GM18951 (cell line): ENCODE measurements at regions of chr1 and their contacts with region 1.

Region 1: GRCh38 chr1:212477014-212477679 is 44.4 kb downstream of the NENF start:
- POLR2A ChIP-seq: no peak

Region 2: GRCh38 chr1:212782422-212783154 is 305.4 kb after region 1 on chr1:
- in situ Hi-C with region 1: loop called (anchors 10 kb)
- POLR2A ChIP-seq: no peak